G401 (cell line): ENCODE measurements at regions of chr11 and their contacts with region 1.

Region 1: GRCh38 chr11:64854534-64855429 is 10.3 kb upstream of the CDC42BPG start:
- DNase-seq: peak; percentile 93

Region 2: GRCh38 chr11:64778508-64779346 is 76.1 kb before region 1 on chr11 and contains the start of gene SF1:
- in situ Hi-C with region 1: loop called (anchors 10 kb)
- DNase-seq: peak; percentile 100
- total RNA-seq, gene SF1: 114 and 170 TPM in 2 replicates

Region 3: GRCh38 chr11:64793271-64794172 is 61.3 kb before region 1 on chr11:
- in situ Hi-C with region 1: no loop called
- DNase-seq: no peak

Region 4: GRCh38 chr11:64900263-64900678 is 45.5 kb after region 1 on chr11:
- in situ Hi-C with region 1: no loop called
- DNase-seq: no peak